ENCODE measurements at regions of chr2 and their contacts with region 1.

Region 1: GRCh38 chr2:39109537-39109936 is 11.3 kb downstream of the SOS1 start:
- DNase-seq: no peak
- ATAC-seq: no peak
- H3K4me3 ChIP-seq: no peak overlapping the region
- H3K27ac ChIP-seq: no peak overlapping the region
- H3K4me1 ChIP-seq: peaks cover 0 to 8% of the 10 kb centered on the region in 2 experiments; a peak in 2 of 5 replicates
- H3K27me3 ChIP-seq: no peaks in the 10 kb centered on the region
- CTCF ChIP-seq: no peak
- EP300 ChIP-seq: no peak
- POLR2A ChIP-seq: no peak
- RAD21 ChIP-seq: no peak

Region 2: GRCh38 chr2:39094852-39095306 is 14.7 kb before region 1 on chr2:
- CTCF ChIA-PET with region 1: no interaction called
- POLR2A ChIA-PET with region 1: interaction called, 10 read pairs
- in situ Hi-C with region 1: no loop called
- intact Hi-C with region 1: no loop called
- DNase-seq: no peak
- ATAC-seq: peak; percentile 55
- H3K4me3 ChIP-seq: no peak overlapping the region
- H3K27ac ChIP-seq: 0 out of 3 replicates have a peak overlapping the region, but pooled peaks have one; percentile 12
- H3K4me1 ChIP-seq: peaks cover 0 to 9% of the 10 kb centered on the region in 2 experiments; a peak in 3 of 5 replicates
- H3K27me3 ChIP-seq: no peaks in the 10 kb centered on the region
- CTCF ChIP-seq: no peak
- EP300 ChIP-seq: no peak
- POLR2A ChIP-seq: no peak
- RAD21 ChIP-seq: no peak

Region 3: DNA sequence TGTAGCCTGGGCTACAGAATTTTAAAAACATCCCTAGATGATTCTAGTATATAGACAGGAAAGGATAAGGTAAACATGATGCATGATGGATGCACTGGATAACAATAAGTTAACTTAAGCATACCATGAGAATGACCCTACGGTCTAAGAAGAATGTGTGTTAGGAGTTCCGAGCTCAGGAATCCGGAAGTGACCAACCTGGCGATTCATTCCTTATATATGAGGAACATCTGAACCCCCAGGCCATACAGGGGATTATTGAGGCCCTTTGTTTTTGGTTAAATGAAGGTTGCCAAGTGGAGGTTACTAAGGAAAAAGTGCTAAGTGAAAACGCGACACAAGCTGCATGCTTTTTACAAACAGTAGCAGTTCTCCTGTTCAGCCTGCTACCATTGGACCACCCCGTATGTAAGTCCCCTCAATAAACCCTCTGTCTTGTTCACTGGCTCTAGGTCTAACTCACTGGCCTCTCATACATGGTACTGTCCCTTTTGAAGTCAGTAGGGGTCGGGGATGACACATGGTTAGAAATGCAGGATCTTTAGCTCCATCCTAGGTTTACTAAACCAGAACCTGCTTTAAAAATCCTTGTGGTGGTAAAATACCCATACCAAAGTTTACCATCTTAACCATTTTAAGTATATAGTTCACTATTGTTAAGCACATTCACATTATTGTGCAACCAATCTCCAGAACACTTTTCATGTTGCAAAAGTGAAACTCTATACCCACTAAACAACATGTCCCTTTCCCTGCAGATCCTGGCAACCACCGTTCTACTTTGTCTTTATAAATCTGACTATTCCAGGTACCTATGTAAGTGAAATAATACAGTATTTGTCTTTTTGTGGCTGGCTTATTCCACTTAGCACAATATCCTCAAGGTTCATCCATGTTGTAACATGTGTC is 438.5 kb after region 1 on chr2:
- CTCF ChIA-PET with region 1: no interaction called
- POLR2A ChIA-PET with region 1: no interaction called
- in situ Hi-C with region 1: no loop called
- intact Hi-C with region 1: no loop called
- DNase-seq: no peak
- ATAC-seq: peak; percentile 43; the same call in 1 of the 3 replicates
- H3K4me3 ChIP-seq: no peak overlapping the region
- H3K27ac ChIP-seq: no peak overlapping the region
- H3K4me1 ChIP-seq: peaks cover 0 to 14% of the 10 kb centered on the region in 2 experiments; a peak in 2 of 5 replicates
- H3K27me3 ChIP-seq: peaks cover 0 to 4% of the 10 kb centered on the region in 2 experiments; a peak in 1 of 5 replicates
- CTCF ChIP-seq: 0 out of 6 replicates have a peak, but pooled peaks of 1 of the 3 experiments have one; percentile 3
- EP300 ChIP-seq: no peak
- POLR2A ChIP-seq: no peak
- RAD21 ChIP-seq: no peak